A549 (cell line): ENCODE measurements at regions of chr3 and their contacts with region 1.

Region 1: DNA sequence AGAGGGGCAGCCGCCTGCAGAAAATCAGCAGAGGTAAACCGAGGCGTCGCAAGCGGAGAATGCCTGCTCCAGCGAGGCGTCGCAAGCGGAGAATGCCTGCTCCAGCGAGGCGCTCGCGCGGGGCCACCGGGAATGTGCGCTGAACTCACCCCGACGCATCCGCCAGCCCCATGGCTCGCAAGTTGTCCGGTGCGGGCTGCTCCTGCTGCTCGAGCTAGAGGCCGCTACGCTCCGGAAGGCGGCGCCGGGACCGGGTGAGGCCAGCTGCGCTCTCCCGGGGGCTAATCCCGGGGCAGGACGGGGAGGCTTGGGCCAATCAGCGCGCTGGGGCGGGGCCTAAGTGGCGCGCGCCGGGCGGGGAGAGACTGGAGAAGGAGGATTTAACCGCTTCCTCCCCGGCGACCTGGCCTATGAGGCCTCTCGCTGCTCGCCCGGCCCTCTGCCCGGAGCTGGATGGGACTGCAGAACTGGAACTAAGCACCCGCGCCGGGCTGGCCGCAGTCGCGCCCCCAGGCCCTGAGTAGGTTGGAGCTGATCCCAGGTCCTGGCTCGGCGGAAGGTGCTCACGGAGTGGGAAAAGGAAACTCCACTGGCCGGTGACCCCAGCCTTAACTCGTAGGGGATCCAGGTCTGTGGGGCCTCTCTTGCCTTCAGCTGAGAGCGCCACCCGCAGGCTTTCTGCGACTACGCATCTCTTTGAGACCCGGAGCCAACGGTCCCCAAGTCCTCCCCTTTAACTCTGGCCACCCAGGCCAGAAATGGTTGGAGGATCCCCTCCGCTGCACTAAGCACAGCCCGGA is at the start of gene SLC26A6:
- DNase-seq: peak; percentile 94 to 98
- ATAC-seq: peak; percentile 90 to 97
- H3K4me3 ChIP-seq: peak within 1 kb of the TSS; percentile 82
- H3K27ac ChIP-seq: peak within 1 kb of the TSS; percentile 79 to 97
- H3K4me1 ChIP-seq: peaks cover 16% of the 10 kb centered on the region
- CTCF ChIP-seq: peak; percentile 53
- EP300 ChIP-seq: no peak
- POLR2A ChIP-seq: peak; percentile 45
- RAD21 ChIP-seq: peak; percentile 48 to 58
- polyA plus RNA-seq, gene SLC26A6: 12.5 and 12.7 TPM in 2 replicates

Region 2: GRCh38 chr3:48548729-48549705 is 86.4 kb before region 1 on chr3:
- CTCF ChIA-PET with region 1: interaction called, 10 read pairs
- POLR2A ChIA-PET with region 1: no interaction called
- DNase-seq: peak in 1 of 2 experiments; percentile 69
- ATAC-seq: peak; percentile 45 to 90
- H3K4me3 ChIP-seq: no peak overlapping the region
- H3K27ac ChIP-seq: 0 out of 6 replicates have a peak overlapping the region, but pooled peaks of 1 of the 2 experiments have one; percentile 48
- H3K4me1 ChIP-seq: no peaks in the 10 kb centered on the region
- CTCF ChIP-seq: peak; percentile 74
- EP300 ChIP-seq: no peak
- POLR2A ChIP-seq: no peak
- RAD21 ChIP-seq: peak; percentile 76 to 87

Region 3: GRCh38 chr3:48595526-48596121 is 39.8 kb before region 1 on chr3:
- CTCF ChIA-PET with region 1: interaction called, 19 read pairs
- POLR2A ChIA-PET with region 1: no interaction called
- DNase-seq: peak; percentile 90 to 96
- ATAC-seq: peak; percentile 69 to 72
- H3K4me3 ChIP-seq: peak overlapping the region; percentile 84
- H3K27ac ChIP-seq: peak overlapping the region; percentile 99 to 100
- H3K4me1 ChIP-seq: peaks cover 75% of the 10 kb centered on the region
- CTCF ChIP-seq: no peak
- EP300 ChIP-seq: peak; percentile 63 to 89; a peak in 3 of 5 replicates
- POLR2A ChIP-seq: no peak
- RAD21 ChIP-seq: peak; percentile 9 to 12; a peak in 1 of 5 replicates

Region 4: DNA sequence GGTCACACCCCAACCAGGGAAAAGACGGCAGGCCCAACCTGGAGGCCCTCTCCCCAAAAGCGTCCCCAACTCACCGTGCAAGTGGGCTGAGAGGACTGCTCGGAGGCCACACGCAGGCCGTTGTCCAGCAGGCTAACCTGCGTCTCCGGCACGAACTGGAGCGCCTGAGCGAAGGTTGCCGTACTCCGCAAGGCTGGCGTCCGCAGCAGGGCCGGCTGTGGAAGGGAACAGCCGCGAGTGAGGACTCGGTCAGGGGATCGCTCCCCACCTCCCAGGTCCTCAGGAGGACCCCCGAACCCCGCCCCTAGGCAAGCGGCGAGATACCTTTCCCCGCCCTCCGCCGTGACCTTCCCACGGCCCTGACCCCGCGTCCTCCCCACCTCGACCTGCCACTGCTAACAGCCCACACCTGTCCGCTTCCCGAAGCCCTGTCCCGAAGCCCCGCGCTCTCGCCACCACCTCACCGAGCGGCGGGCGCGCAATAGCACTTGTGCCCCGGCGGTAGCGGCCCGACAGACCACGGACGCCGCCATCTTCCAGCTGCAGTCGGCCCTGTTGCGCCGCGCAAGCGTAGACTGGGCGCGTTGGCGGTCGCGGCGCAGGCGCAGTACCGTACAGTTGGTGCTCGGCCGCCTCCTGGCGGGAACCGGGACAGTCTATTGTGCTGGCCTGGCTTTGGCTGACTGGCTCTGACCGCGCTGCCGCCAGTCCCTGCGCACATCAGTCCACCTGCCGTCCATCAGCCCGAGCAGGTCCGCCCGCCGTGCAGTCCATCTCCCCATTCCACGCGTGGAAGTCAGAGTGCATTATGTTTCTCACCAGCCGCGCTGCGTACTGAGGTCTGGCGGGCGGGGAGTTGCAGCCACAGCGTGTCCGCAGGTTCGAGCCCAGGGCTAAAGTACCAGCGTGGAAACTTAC is 26.1 kb before region 1 on chr3 and contains the start of gene UQCRC1:
- CTCF ChIA-PET with region 1: interaction called, 13 read pairs
- POLR2A ChIA-PET with region 1: no interaction called
- DNase-seq: peak; percentile 77 to 92
- ATAC-seq: peak; percentile 98 to 100
- H3K4me3 ChIP-seq: peak within 1 kb of the TSS; percentile 70
- H3K27ac ChIP-seq: peak within 1 kb of the TSS; percentile 87 to 99
- H3K4me1 ChIP-seq: peaks cover 19% of the 10 kb centered on the region
- CTCF ChIP-seq: peak; percentile 44; the same call in 2 of the 3 replicates
- EP300 ChIP-seq: no peak
- POLR2A ChIP-seq: peak; percentile 89
- RAD21 ChIP-seq: peak; percentile 32 to 45; a peak in 3 of 5 replicates
- polyA plus RNA-seq, gene UQCRC1: 279 and 338 TPM in 2 replicates

Region 5: GRCh38 chr3:48619541-48620517 is 15.6 kb before region 1 on chr3:
- CTCF ChIA-PET with region 1: interaction called, 17 read pairs
- POLR2A ChIA-PET with region 1: interaction called, 3 read pairs
- DNase-seq: no peak
- ATAC-seq: no peak
- H3K4me3 ChIP-seq: no peak overlapping the region
- H3K27ac ChIP-seq: no peak overlapping the region
- H3K4me1 ChIP-seq: no peaks in the 10 kb centered on the region
- CTCF ChIP-seq: no peak
- EP300 ChIP-seq: no peak
- POLR2A ChIP-seq: no peak
- RAD21 ChIP-seq: no peak

Region 6: DNA sequence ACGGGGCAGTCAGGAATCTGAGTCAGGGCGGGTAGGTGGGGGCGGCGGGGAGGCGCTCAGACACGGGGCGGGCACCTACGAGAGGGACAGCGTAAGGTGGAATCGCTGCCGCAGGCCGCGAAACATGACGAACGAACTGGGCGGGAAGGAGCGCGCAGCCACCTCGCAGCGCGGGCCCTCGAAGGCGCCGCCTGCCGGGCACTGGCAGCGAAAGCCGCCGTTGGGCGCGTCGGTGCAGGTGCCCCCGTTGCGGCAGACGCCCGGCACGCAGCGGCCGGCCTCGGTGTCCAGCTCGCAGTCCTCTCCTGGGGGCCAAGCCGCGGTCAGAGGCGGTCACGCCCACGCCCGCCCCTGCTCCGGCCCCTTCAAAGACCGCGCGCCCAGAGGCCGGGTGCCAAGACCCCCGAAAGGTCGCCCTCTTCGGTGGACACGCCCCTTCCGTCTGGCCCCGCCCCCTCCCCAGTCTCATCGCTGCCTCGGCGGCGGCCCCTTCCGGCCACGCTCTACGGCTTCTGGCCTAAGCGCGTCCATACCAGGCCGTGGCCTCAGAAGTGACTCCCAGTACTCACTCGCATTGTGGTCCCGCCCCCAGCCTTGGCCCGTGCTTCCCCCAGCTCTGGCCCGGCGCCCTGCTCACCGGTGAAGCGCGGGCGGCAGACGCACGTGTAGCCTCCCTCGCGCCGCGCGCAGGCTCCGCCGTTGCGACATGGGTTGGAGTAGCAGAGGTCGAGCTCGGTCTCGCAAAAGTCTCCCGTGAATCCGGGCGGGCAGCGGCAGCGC is 20.8 kb after region 1 on chr3:
- CTCF ChIA-PET with region 1: interaction called, 46 read pairs
- POLR2A ChIA-PET with region 1: interaction called, 9 read pairs
- DNase-seq: peak; percentile 81 to 82
- ATAC-seq: peak; percentile 78 to 88
- H3K4me3 ChIP-seq: peak overlapping the region; percentile 51
- H3K27ac ChIP-seq: peak overlapping the region; percentile 75 to 88
- H3K4me1 ChIP-seq: peaks cover 9% of the 10 kb centered on the region; the same call in 1 of the 3 replicates
- CTCF ChIP-seq: peak; percentile 69
- EP300 ChIP-seq: no peak
- POLR2A ChIP-seq: 0 out of 2 replicates have a peak, but pooled peaks have one; percentile 23
- RAD21 ChIP-seq: peak; percentile 38 to 59; a peak in 4 of 5 replicates